ENCODE measurements at regions of chr21 and their contacts with region 1.

Region 1: GRCh38 chr21:15592271-15592860 is 137.4 kb upstream of the USP25 start:
- DNase-seq: no peak
- H3K4me3 ChIP-seq: no peak overlapping the region
- H3K27ac ChIP-seq: no peak overlapping the region
- H3K4me1 ChIP-seq: no peaks in the 10 kb centered on the region
- H3K27me3 ChIP-seq: no peaks in the 10 kb centered on the region
- CTCF ChIP-seq: peak; percentile 22 to 46 (median 24)

Region 2: DNA sequence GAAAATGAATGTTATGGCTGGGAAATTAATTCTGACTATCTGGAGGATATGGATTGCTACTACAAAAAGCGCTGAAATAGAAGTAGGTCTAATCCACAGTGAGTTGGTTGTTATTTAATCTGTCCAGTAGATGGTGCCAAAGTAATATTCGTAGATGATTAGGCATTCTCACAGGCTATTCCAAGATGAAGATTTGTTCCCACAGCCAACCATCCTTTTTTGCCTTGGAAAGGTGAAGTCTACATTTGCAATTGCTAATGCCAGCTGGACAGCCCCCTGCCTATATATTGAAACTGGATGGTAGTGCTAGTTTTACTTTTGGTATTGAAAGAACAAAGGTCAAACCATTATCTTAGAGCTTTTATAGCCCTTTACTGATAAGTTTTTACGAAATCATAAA is 1332.6 kb before region 1 on chr21:
- intact Hi-C with region 1: loop called (anchors 2 kb)
- DNase-seq: no peak
- H3K4me3 ChIP-seq: no peak overlapping the region
- H3K27ac ChIP-seq: no peak overlapping the region
- H3K4me1 ChIP-seq: no peaks in the 10 kb centered on the region
- H3K27me3 ChIP-seq: no peaks in the 10 kb centered on the region
- CTCF ChIP-seq: peak; percentile 32 to 57 (median 46)

Region 3: DNA sequence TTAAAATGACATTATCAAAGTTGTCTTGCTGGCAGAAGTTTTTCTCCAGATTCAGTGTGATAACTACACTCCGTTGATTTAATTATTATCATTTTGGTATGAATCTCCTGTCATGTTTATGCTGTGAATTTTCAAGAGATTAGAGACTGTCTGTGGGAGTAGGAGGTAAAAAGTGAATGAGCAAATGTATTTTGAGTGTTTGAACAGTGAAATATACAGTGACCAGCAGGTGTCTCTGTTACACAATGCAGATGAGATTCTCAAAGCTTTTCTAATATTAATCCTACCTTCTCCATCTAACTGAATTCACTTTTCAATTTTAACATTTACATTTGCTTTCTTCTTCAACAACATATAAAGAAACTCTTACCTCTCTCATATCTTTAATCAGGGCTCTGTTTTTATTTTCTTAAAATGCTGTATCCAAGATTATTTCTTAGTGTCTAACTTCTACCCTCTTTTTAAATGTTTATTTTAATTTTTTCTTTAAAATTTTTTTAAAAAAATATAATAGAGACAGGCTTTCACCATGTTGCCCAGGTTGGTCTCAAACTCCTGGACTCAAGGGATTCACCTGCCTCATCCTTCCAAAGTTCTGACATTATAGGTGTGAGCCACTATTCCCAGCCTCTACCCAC is 1188.6 kb before region 1 on chr21:
- intact Hi-C with region 1: loop called (anchors 5 kb)
- DNase-seq: no peak
- H3K4me3 ChIP-seq: no peak overlapping the region
- H3K27ac ChIP-seq: no peak overlapping the region
- H3K4me1 ChIP-seq: no peaks in the 10 kb centered on the region
- H3K27me3 ChIP-seq: no peaks in the 10 kb centered on the region
- CTCF ChIP-seq: peak; percentile 23 to 37 (median 33)

Region 4: DNA sequence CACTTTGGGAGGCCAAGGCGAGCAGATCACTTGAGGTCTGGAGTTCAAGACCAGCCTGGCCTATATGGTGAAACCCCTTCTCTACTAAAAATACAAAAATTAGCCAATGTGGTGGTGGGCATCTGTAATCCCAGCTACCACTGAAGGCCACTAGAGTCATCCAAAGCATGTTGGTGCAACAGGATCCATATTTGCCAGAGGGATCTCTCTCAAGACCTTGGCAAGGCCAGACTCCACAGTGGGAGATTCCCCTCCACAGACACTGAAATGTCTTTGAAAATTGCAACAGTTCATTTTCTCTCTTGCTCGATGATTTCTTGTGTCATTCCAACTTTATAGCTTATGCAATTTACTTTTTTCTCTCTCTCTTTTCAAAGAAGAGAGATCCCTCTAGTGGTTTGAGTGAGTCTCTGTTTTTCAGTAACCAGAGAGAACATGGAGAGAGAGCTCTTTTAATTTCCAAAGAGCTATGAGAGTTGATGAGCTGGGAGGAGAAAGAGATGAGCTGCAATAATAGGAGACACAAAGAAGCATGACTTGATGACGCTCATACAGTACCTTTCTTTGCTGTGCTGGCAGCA is 39.4 kb before region 1 on chr21:
- intact Hi-C with region 1: no loop called
- DNase-seq: no peak
- H3K4me3 ChIP-seq: no peak overlapping the region
- H3K27ac ChIP-seq: no peak overlapping the region
- H3K4me1 ChIP-seq: no peaks in the 10 kb centered on the region
- H3K27me3 ChIP-seq: no peaks in the 10 kb centered on the region
- CTCF ChIP-seq: no peak

Region 5: GRCh38 chr21:15638856-15639549 is 46.6 kb after region 1 on chr21:
- intact Hi-C with region 1: no loop called
- DNase-seq: no peak
- H3K4me3 ChIP-seq: no peak overlapping the region
- H3K27ac ChIP-seq: no peak overlapping the region
- H3K4me1 ChIP-seq: no peaks in the 10 kb centered on the region
- H3K27me3 ChIP-seq: no peaks in the 10 kb centered on the region
- CTCF ChIP-seq: no peak

Region 6: GRCh38 chr21:15841856-15842564 is 249.6 kb after region 1 on chr21:
- intact Hi-C with region 1: no loop called
- DNase-seq: no peak
- H3K4me3 ChIP-seq: no peak overlapping the region
- H3K27ac ChIP-seq: no peak overlapping the region
- H3K4me1 ChIP-seq: no peaks in the 10 kb centered on the region
- H3K27me3 ChIP-seq: no peaks in the 10 kb centered on the region
- CTCF ChIP-seq: no peak

Measured in ascending aorta (tissue), 2 donors.